ENCODE measurements at regions of chrX and their contacts with region 1.

Region 1: GRCh38 chrX:47540754-47541538 is 20.1 kb upstream of the ARAF start:
- DNase-seq: peak; percentile 63 to 92 (median 78)
- ATAC-seq: peak; percentile 100
- H3K4me3 ChIP-seq: no peak overlapping the region
- H3K27ac ChIP-seq: peak overlapping the region; percentile 72
- H3K4me1 ChIP-seq: peaks cover 0 to 8% of the 10 kb centered on the region in 2 experiments; a peak in 3 of 5 replicates
- H3K27me3 ChIP-seq: no peaks in the 10 kb centered on the region
- CTCF ChIP-seq: peak; percentile 66 to 74 (median 74)
- EP300 ChIP-seq: peak; percentile 70
- POLR2A ChIP-seq: peak; percentile 56; the same call in 1 of the 2 replicates
- RAD21 ChIP-seq: peak; percentile 66 to 67

Region 2: GRCh38 chrX:47581731-47582647 is 41.0 kb after region 1 on chrX and contains the start of gene TIMP1:
- CTCF ChIA-PET with region 1: no interaction called
- POLR2A ChIA-PET with region 1: no interaction called
- in situ Hi-C with region 1: no loop called
- intact Hi-C with region 1: loop called (anchors 1 kb)
- DNase-seq: peak; percentile 92 to 95 (median 92)
- ATAC-seq: peak; percentile 98
- H3K4me3 ChIP-seq: peak within 1 kb of the TSS; percentile 75
- H3K27ac ChIP-seq: peak within 1 kb of the TSS; percentile 91
- H3K4me1 ChIP-seq: peaks cover 23 to 32% of the 10 kb centered on the region in 2 experiments; a peak in 4 of 5 replicates
- H3K27me3 ChIP-seq: no peaks in the 10 kb centered on the region
- CTCF ChIP-seq: no peak
- EP300 ChIP-seq: no peak; the same call in 1 of the 2 replicates
- POLR2A ChIP-seq: peak; percentile 86
- RAD21 ChIP-seq: no peak
- polyA plus RNA-seq, gene TIMP1: 530 to 699 TPM

Region 3: DNA sequence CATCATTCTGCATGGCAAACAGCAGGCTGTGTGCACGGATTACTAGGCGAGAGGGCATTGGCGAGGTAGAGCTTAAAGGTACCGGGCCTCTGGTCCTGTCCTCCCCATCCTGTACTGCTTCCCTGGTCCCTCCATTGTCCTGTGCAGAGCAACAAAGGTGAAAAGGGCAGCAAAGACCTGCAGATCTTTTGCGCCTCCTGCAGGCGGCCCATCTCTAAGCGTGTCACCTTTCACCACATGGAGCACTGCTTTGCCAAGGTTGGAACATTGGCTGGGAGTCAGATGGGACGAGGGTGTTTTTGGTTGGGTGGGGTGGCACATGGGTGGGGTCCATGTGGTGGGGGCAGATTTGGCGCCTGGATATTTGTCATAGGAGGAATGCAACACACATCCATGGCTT is 182.7 kb after region 1 on chrX:
- CTCF ChIA-PET with region 1: no interaction called
- POLR2A ChIA-PET with region 1: no interaction called
- in situ Hi-C with region 1: no loop called
- intact Hi-C with region 1: loop called (anchors 1 kb)
- DNase-seq: peak in 3 of 4 experiments; percentile 15 to 65 (median 25)
- ATAC-seq: peak; percentile 95
- H3K4me3 ChIP-seq: no peak overlapping the region
- H3K27ac ChIP-seq: no peak overlapping the region
- H3K4me1 ChIP-seq: peaks cover 0 to 4% of the 10 kb centered on the region in 2 experiments; a peak in 3 of 5 replicates
- H3K27me3 ChIP-seq: peaks cover 0 to 9% of the 10 kb centered on the region in 2 experiments; a peak in 1 of 5 replicates
- CTCF ChIP-seq: peak; percentile 72 to 91 (median 86)
- EP300 ChIP-seq: no peak
- POLR2A ChIP-seq: no peak
- RAD21 ChIP-seq: peak; percentile 81 to 84

Region 4: DNA sequence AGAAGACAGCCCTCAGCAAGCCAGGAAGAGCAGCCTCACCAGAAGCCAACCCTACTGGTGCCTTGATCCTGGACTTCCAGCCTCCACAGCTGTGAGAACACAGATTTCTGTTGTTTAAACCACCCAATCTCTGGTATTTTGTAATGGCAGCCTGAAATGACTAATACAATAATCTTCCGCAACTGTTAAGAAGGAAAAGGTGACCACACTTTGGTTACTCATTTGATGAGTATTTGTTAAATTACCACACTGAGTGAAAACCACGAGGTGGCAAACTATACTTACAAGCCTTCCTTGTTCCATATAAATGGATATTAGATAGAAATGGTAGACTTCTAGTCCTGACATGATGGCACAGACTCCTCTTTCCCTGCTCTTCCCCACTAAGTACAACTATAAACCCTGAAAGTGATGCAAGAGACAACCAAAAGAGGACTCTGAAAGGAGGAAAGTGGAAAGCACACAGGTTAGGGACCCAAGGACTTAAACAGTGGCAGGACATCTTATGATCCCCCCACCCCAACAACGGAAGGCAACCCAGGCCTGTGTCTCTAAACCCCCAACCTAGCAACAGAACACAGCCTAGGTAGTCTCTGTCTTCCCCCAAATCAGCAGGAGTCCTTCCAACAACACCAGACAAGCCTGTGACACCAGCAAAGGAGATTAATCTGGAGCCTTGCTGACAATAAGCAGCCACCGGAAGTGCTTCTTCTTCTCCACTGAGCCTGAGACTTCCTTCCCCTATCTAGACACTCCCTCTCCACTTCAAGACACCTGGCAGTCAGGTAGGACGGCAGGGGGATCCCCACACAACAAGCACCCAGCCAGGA is 450.5 kb after region 1 on chrX:
- CTCF ChIA-PET with region 1: no interaction called
- POLR2A ChIA-PET with region 1: no interaction called
- in situ Hi-C with region 1: no loop called
- intact Hi-C with region 1: no loop called
- DNase-seq: no peak
- ATAC-seq: no peak
- H3K4me3 ChIP-seq: no peak overlapping the region
- H3K27ac ChIP-seq: no peak overlapping the region
- H3K4me1 ChIP-seq: no peaks in the 10 kb centered on the region
- H3K27me3 ChIP-seq: no peaks in the 10 kb centered on the region
- CTCF ChIP-seq: no peak
- EP300 ChIP-seq: no peak
- POLR2A ChIP-seq: no peak
- RAD21 ChIP-seq: no peak

Measured in K562 (cell line).